ENCODE measurements at regions of chrX and their contacts with region 1.

Region 1: GRCh38 chrX:9995855-9996339 is 28.7 kb downstream of the CLDN34 start:
- DNase-seq: no peak
- ATAC-seq: peak; percentile 75
- H3K4me3 ChIP-seq: no peak overlapping the region
- H3K27ac ChIP-seq: no peak overlapping the region
- H3K4me1 ChIP-seq: no peaks in the 10 kb centered on the region
- H3K27me3 ChIP-seq: no peaks in the 10 kb centered on the region
- CTCF ChIP-seq: peak; percentile 83

Region 2: DNA sequence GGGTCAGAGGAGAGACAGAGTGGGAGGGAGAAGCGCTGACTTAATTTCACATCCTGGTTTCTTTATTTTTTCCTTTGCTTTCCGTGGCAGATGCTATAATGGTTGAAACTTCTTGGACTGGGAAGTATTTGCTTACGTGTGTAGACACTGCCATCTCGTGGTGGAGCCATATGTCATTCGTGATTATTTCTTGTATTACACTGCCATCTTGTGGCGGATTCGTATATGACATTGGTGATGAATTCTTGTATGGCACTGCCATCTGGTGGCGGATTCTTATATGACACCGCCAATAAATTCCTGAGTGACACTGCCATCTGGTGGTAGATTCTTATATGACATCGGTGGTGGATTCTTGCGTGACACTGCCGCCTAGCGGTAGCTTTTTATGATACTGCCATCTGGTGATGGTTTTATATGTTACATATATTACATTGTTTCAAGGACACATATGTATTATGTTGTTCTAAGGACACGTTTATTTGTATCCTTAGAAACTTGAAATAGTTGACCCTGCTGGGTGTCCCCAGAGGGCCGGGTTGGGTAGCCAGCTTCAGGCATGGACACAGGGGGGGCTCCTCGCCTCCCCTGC is 123.6 kb after region 1 on chrX:
- CTCF ChIA-PET with region 1: no interaction called
- POLR2A ChIA-PET with region 1: no interaction called
- in situ Hi-C with region 1: no loop called
- intact Hi-C with region 1: loop called (anchors 2 kb)
- DNase-seq: peak; percentile 62
- ATAC-seq: no peak
- H3K4me3 ChIP-seq: no peak overlapping the region
- H3K27ac ChIP-seq: no peak overlapping the region
- H3K4me1 ChIP-seq: no peaks in the 10 kb centered on the region
- H3K27me3 ChIP-seq: no peaks in the 10 kb centered on the region
- CTCF ChIP-seq: peak; percentile 98

Measured in Panc1 (cell line).